Mammary epithelial cell (primary cell): ENCODE measurements at regions of chr10 and their contacts with region 1.

Region 1: GRCh38 chr10:23516530-23516929 is 77.7 kb downstream of the OTUD1 start:
- DNase-seq: peak; percentile 23
- H3K4me3 ChIP-seq: no peak overlapping the region
- H3K27ac ChIP-seq: no peak overlapping the region
- H3K4me1 ChIP-seq: peaks cover 9% of the 10 kb centered on the region
- H3K27me3 ChIP-seq: peaks cover 8% of the 10 kb centered on the region
- CTCF ChIP-seq: peak; percentile 62 to 72

Region 2: DNA sequence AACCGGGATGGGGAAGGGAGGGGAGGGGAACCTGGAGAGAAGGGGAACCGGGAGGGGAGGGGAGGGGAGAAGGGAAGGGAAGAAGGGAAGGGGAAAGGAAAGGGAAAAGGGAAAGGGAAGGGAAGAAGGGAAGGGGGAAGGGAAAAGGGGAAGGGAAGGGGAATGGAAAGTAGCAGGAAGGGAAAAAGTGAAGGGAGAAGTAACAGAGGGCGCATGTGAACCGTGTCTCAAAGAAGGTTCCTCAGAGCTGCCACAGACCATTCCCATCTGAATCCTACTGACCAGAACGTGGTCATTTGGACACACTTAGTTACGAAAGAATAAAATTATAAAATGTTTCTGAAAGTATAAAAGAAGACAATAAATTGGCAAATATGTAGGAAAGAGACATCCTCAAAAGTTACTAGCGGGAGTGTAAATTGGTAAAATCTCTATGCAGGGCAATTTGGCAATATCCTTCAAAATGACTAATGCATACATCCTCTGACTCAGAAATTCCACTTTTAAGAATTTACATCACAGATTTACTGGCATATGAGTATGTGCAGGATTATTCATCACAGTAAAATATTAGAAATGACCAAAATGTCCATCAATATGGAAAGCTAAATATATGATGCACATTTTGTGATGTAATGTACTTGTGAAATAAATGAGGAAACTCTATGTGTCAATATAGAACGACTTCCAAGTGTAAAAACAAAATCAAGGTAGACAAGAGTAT is 184.8 kb before region 1 on chr10:
- CTCF ChIA-PET with region 1: no interaction called
- dilution Hi-C with region 1: no loop called
- in situ Hi-C with region 1: no loop called
- intact Hi-C with region 1: no loop called
- DNase-seq: peak; percentile 90
- H3K4me3 ChIP-seq: no peak overlapping the region
- H3K27ac ChIP-seq: peak overlapping the region; percentile 54
- H3K4me1 ChIP-seq: peaks cover 8% of the 10 kb centered on the region
- H3K27me3 ChIP-seq: no peaks in the 10 kb centered on the region
- CTCF ChIP-seq: no peak

Region 3: DNA sequence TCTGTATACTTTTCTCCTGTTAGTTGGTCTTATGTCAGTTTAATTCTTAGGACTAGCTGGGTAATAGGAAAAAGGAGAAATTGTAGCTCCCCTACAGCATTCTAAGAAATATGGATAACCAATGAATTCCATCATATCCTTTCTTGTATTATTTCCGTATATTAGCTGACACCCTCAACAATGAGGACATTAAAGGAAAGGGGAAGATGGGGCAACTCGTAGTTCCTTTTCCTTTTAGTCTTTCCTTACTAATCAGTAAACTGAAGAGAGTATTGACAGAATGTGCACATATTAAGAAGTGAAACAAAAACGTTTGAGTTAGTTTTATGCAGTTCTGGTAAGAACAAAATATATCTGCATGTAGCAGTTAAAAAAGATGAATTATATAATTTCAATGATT is 136.8 kb before region 1 on chr10:
- CTCF ChIA-PET with region 1: no interaction called
- dilution Hi-C with region 1: no loop called
- in situ Hi-C with region 1: no loop called
- intact Hi-C with region 1: loop called (anchors 5 kb)
- DNase-seq: no peak
- H3K4me3 ChIP-seq: no peak overlapping the region
- H3K27ac ChIP-seq: no peak overlapping the region
- H3K4me1 ChIP-seq: peaks cover 22% of the 10 kb centered on the region
- H3K27me3 ChIP-seq: no peaks in the 10 kb centered on the region
- CTCF ChIP-seq: no peak

Region 4: DNA sequence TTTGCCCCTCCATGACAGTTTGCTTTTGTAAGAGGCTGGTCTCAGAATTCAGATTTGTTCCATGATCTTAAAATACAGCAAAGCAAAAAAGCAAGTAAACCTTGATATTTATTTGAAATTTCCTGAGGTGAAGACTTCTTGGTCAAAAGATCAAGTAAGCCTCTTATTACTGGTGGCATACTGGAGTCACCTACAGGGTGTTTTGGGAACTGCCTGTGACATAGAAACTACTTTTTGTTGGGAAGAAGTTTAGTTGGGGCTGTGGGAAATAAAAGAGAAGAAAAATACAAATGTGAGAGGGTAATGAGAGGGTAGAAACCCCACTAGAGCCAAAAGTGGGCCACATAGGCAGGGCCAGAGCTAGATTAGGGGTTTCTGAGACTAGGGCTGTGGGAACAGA is 140.2 kb after region 1 on chr10:
- CTCF ChIA-PET with region 1: no interaction called
- dilution Hi-C with region 1: no loop called
- in situ Hi-C with region 1: no loop called
- intact Hi-C with region 1: loop called (anchors 5 kb)
- DNase-seq: peak; percentile 11
- H3K4me3 ChIP-seq: no peak overlapping the region
- H3K27ac ChIP-seq: no peak overlapping the region
- H3K4me1 ChIP-seq: no peaks in the 10 kb centered on the region
- H3K27me3 ChIP-seq: no peaks in the 10 kb centered on the region
- CTCF ChIP-seq: peak; percentile 59 to 70

Region 5: GRCh38 chr10:23779301-23779700 is 262.8 kb after region 1 on chr10:
- CTCF ChIA-PET with region 1: no interaction called
- dilution Hi-C with region 1: no loop called
- in situ Hi-C with region 1: no loop called
- intact Hi-C with region 1: no loop called
- DNase-seq: peak; percentile 1
- H3K4me3 ChIP-seq: no peak overlapping the region
- H3K27ac ChIP-seq: no peak overlapping the region
- H3K4me1 ChIP-seq: no peaks in the 10 kb centered on the region
- H3K27me3 ChIP-seq: no peaks in the 10 kb centered on the region
- CTCF ChIP-seq: no peak